A673 (cell line): ENCODE measurements at regions of chr3 and their contacts with region 1.

Region 1: DNA sequence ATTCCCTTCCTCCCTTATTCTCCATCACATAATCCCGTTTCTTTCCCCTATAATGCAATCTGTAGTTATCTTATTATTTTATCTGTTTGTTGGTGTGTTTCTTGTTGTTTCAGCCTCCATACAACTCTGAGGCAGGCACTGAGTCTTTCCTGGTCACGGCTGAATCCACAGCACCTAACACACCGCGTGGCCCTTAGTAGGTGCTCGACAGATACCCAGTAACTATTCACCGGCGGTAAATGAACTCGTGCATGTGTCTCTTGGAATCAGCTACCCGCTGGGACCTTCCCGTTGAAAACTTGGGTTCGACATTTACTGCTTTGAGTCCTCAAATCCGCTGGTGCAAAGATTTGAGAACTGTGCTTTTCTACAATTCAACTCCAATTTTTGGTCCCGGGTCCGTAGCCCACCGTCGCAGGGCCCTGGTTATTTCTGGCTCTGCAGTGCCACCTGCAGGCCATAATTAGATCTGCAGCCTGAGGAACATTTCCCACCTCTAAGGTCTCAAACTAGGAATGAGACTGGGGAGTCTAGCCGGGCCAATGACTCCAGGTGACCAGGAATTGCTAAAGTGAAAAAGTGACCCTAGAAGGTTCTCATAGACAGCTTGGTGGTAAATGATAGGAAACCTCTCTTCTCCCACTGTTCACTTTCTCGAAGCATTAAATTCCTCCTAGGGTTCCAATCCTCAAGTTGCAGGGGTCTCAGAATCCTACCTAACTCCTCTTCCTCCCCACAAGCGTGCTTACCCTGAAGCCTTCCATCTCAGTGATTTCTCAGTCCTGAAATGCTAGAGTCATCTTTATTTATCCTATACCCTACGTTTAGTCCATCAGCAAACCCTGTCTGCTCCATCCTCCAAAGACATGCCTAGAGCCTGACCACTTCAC is 40.0 kb upstream of the TRH start:
- DNase-seq: peak; percentile 62
- H3K4me3 ChIP-seq: no peak overlapping the region
- H3K27ac ChIP-seq: no peak overlapping the region
- H3K4me1 ChIP-seq: peaks cover 16% of the 10 kb centered on the region
- H3K27me3 ChIP-seq: no peaks in the 10 kb centered on the region
- CTCF ChIP-seq: peak; percentile 95

Region 2: GRCh38 chr3:129383292-129383860 is 551.1 kb before region 1 on chr3:
- CTCF ChIA-PET with region 1: no interaction called
- POLR2A ChIA-PET with region 1: no interaction called
- intact Hi-C with region 1: loop called (anchors 1 kb)
- DNase-seq: peak; percentile 78
- H3K4me3 ChIP-seq: no peak overlapping the region
- H3K27ac ChIP-seq: no peak overlapping the region
- H3K4me1 ChIP-seq: no peaks in the 10 kb centered on the region
- H3K27me3 ChIP-seq: no peaks in the 10 kb centered on the region
- CTCF ChIP-seq: peak; percentile 80

Region 3: DNA sequence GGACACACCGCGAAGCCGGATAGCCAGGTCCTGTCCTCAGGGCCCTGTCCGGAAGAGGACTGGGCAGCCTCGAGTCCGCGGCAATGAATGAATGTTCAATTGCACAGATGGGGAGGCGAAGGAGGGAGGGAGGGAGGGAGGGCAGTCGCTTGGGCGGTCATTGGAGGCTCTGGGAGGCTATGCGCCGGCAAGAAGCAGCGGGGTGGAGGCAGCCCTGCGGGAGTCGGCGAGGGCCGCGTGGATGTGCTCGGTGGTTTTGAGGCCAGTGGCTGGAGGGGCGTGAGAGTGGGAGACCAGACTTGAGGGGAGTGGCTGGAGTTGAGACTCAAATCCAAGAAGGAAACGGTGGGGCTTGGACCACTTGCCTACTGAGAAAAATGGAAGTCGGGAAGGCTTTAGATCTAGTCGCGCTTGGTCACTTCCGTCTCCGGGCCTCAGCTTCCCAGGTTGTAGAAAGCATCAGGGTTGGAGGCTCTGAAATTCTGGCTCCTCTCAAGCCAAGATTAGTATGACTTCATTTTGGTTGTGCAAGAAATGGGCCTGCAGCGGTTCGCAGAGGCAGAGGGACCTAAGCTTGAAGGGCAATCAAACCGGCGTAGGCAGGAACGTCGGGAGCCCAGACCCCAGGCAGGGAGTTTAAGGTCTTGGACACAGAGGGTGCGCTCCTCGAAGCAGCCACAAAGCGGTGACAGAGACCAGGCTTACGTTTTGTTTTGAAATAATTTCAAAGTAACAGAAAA is 306.9 kb before region 1 on chr3:
- CTCF ChIA-PET with region 1: no interaction called
- POLR2A ChIA-PET with region 1: no interaction called
- intact Hi-C with region 1: loop called (anchors 1 kb)
- DNase-seq: peak; percentile 91
- H3K4me3 ChIP-seq: peak overlapping the region; percentile 52
- H3K27ac ChIP-seq: peak overlapping the region; percentile 75
- H3K4me1 ChIP-seq: peaks cover 20% of the 10 kb centered on the region
- H3K27me3 ChIP-seq: no peaks in the 10 kb centered on the region
- CTCF ChIP-seq: peak; percentile 84

Region 4: DNA sequence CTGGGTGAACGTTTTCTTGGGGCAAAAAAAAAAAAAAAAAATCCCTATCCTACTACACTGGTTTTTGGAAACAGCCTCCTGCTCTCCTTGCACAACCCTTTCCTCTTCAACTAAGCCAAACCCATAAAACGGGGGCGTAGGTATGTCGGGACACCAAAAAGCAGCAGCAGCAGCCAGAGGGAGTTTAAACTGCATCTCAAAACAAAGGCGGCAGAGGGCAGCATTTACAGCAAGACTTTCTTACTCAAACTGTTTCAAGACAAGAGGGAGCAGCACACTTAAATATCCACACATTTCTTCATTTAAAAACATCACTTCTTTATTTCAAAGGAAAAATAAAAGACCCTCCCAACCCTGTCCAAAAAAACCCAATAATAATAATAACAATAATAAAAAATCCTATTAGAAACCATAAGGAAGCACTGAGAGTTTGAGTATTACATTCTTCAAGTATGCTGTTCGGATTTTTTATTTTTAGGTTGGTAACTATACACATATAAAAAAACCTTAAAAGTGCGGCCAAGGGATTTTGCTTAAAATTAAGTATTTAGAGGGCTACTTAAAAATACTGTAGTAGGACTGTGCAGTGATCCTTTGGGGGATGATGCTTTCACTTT is 284.1 kb before region 1 on chr3:
- CTCF ChIA-PET with region 1: no interaction called
- POLR2A ChIA-PET with region 1: no interaction called
- intact Hi-C with region 1: loop called (anchors 1 kb)
- DNase-seq: peak; percentile 85
- H3K4me3 ChIP-seq: no peak overlapping the region
- H3K27ac ChIP-seq: no peak overlapping the region
- H3K4me1 ChIP-seq: peaks cover 28% of the 10 kb centered on the region
- H3K27me3 ChIP-seq: no peaks in the 10 kb centered on the region
- CTCF ChIP-seq: peak; percentile 85

Region 5: DNA sequence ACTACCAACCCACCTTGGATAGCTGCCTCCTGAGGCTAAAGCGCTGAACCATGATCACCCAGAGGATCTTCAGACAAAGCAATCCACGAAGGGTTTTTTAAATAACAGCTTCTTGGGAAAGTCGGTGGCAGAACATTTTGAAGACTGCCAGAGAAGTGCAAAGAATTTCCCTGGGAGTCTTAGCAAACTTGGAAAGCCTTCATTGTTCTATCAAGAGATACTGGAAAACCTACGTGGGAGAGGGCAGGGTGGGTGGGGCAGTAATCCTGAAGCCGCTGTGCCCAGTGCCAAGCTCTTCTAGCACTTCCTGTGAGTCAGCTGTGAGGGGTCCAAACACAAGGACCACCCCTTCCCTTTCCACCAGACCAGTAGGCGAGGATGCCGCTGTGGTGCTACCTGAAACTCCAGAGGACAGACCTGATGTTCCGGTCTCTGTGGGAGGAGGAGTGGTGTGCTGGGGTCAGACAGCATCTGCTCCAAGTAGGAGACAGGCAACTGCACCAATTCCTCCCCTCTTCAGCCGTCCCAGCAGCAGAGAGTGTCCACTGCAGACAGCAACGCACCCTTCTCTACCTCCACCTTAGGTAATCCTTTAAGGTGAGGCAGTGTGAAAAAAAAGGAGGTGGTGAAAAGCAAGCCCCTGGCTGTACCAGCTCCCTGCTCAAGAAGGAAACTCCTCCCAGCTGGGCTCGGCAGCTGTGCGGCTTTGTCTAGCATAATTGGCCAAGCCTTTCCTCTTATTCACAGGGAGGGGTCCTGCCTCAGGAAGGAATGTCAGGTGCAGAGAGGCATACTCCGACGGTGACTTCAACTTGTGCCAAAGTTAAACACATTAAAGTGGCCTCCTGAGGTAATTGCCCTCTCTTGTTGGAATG is 139.9 kb before region 1 on chr3:
- CTCF ChIA-PET with region 1: no interaction called
- POLR2A ChIA-PET with region 1: no interaction called
- intact Hi-C with region 1: no loop called
- DNase-seq: peak; percentile 61
- H3K4me3 ChIP-seq: peak overlapping the region; percentile 18
- H3K27ac ChIP-seq: no peak overlapping the region
- H3K4me1 ChIP-seq: peaks cover 24% of the 10 kb centered on the region
- H3K27me3 ChIP-seq: no peaks in the 10 kb centered on the region
- CTCF ChIP-seq: no peak

Region 6: DNA sequence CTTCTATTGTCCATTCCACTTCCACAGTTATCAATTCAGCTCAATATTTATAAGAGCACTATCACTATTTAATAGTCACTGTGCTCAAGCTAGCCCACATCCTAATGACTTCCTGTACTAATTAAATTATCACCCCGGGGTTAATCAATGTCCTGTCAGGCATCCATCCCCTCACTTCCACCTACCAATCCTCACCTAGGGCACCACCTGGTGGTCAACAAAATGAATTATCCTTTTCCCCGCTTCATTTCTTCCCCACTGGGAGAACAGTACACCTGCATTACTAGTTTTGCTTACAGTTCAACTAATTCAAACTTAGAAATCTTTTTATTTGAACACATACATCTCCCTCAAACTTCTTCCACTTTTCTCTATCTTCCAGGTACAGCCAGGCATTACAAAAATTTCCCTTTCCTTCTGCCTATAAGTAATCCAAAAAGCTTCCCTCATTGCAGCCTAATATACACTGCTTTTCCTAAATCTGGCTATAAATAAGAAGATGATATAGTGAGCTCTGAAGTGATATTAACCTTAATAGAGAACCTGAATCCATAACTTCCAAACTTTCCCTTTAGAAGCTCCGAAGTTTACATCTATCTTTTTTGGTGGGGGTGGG is 109.4 kb before region 1 on chr3:
- CTCF ChIA-PET with region 1: no interaction called
- POLR2A ChIA-PET with region 1: no interaction called
- intact Hi-C with region 1: loop called (anchors 2 kb)
- DNase-seq: peak; percentile 68
- H3K4me3 ChIP-seq: no peak overlapping the region
- H3K27ac ChIP-seq: no peak overlapping the region
- H3K4me1 ChIP-seq: peaks cover 11% of the 10 kb centered on the region
- H3K27me3 ChIP-seq: no peaks in the 10 kb centered on the region
- CTCF ChIP-seq: peak; percentile 78